Activated T-helper 2 cell treated with anti-CD3 and anti-CD28 coated beads, Interferon-gamma antibody, Interleukin-2, Interleukin-4, amounts not matched to agents 10 μg/mL and 5 μg/mL and 100 μg/mL, durations not matched to agents 14 hours and 24 hours and 36 hours (primary cell): ENCODE measurements at regions of chr5 and their contacts with region 1.

Region 1: GRCh38 chr5:40841068-40841805 is at the start of gene CARD6:
- DNase-seq: no peak
- H3K4me3 Mint-ChIP-seq: peak within 1 kb of the TSS; percentile 81
- H3K27ac Mint-ChIP-seq: peak within 1 kb of the TSS; percentile 69
- H3K4me1 Mint-ChIP-seq: peaks cover 25% of the 10 kb centered on the region
- H3K27me3 Mint-ChIP-seq: peaks cover 10% of the 10 kb centered on the region
- total RNA-seq, gene CARD6: 1.5 and 1.6 TPM in 2 replicates

Region 2: GRCh38 chr5:40879163-40879942 is 38.1 kb after region 1 on chr5:
- intact Hi-C with region 1: loop called (anchors 5 kb)
- DNase-seq: no peak
- H3K4me3 Mint-ChIP-seq: no peak overlapping the region
- H3K27ac Mint-ChIP-seq: no peak overlapping the region
- H3K4me1 Mint-ChIP-seq: peaks cover 4% of the 10 kb centered on the region
- H3K27me3 Mint-ChIP-seq: peaks cover 12% of the 10 kb centered on the region